Vagina (tissue), 2 donors: ENCODE measurements at regions of chr17 and their contacts with region 1.

Region 1: GRCh38 chr17:979538-980405 is at the start of gene NXN:
- DNase-seq: no peak
- H3K4me3 ChIP-seq: peak within 1 kb of the TSS; percentile 93
- H3K27ac ChIP-seq: peak within 1 kb of the TSS; percentile 93
- H3K4me1 ChIP-seq: peaks cover 43% of the 10 kb centered on the region
- H3K27me3 ChIP-seq: no peaks in the 10 kb centered on the region
- CTCF ChIP-seq: no peak
- POLR2A ChIP-seq: peak; percentile 18 to 71
- total RNA-seq, gene NXN: 51.6 TPM

Region 2: DNA sequence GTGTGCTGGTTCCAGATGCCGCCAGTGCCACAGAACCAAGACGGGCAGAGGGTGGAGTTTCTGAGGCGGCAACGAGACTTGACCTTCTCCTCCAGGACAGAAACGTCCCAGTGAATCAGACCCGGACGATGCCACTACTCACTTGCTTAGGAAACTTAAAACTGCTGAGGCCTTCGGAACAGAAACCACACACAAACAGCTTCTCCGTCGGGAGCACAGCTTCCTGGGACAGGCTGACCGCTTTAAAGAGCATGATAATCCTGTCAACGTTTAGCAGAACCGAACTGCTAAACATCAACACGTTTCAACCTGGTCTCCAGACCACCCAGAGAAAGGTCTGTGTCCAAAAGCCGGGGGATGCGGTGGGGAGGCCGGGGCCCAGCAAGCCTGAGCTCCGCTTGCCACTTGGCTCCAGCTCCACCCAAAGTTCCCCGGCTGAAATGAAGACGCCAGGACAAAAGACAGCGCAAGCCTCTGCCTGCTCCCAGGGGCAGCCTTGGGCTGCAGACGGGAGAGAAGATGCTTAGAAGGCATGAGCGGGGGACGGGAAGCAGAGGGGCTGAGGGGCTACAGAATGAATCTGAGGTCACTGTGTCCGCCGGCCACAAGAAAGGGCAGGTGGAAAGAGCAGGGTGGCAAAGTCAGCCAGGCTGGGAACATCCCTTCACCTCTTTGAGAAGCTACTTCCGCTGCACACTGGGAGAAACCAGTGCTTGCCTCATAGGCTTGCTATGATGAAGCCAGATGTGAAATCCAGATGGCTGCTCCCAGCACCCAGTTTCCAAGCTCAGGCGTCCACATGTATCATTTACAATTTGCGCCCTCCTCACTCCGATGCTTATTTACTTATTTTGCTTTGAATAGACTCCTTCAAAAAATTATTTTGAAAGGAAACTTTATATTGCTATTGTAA is 128.7 kb before region 1 on chr17:
- intact Hi-C with region 1: loop called (anchors 10 kb)
- DNase-seq: no peak
- H3K4me3 ChIP-seq: peak overlapping the region; percentile 18
- H3K27ac ChIP-seq: peak overlapping the region; percentile 75
- H3K4me1 ChIP-seq: peaks cover 57% of the 10 kb centered on the region
- H3K27me3 ChIP-seq: no peaks in the 10 kb centered on the region
- CTCF ChIP-seq: no peak
- POLR2A ChIP-seq: no peak

Region 3: DNA sequence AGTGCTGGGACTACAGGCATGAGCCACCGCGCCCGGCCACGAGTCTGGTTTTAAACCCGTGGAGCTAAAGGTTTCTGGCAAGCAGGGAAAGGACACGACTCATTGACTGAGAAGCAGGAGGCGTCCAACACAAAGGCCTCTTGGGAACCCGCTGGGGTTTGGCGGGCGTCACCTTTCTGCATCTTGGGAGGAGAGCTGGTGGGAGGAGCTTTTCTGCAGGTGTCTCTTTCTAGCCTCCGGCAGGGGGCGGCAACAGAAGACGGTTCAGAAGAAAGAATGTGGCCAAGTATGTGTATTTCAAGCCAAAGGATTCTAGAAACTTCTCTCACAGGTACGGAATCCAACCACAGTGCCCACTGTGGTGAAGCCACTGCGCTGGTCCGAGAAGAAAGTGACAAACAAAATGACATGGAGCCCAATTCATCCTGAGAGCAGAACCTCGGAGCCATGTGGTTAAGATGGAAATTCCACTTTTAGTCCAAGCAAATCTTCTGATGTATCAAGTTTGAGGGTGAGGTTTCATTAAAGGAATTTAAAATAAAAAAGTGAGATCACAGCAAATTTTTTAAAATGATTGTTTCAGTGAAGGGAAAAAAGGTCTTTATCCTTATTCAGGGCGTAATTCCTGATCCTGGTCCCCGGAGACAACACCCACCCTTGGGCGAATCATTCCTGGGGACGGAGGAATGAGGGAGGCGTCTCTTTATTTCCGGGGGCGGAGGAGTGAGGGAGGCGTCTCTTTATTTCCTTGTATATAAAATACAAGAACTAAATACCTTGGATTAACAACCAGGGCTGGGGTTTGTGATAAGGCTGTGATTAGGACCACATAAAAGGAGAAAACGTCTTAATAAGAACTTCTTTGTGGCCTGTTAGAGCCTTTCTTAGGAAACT is 100.0 kb before region 1 on chr17:
- intact Hi-C with region 1: loop called (anchors 10 kb)
- DNase-seq: no peak
- H3K4me3 ChIP-seq: no peak overlapping the region
- H3K27ac ChIP-seq: peak overlapping the region; percentile 80
- H3K4me1 ChIP-seq: peaks cover 60% of the 10 kb centered on the region
- H3K27me3 ChIP-seq: no peaks in the 10 kb centered on the region
- CTCF ChIP-seq: peak; percentile 21 to 60 (median 34)
- POLR2A ChIP-seq: no peak

Region 4: GRCh38 chr17:1022278-1023024 is 42.7 kb after region 1 on chr17:
- intact Hi-C with region 1: no loop called
- DNase-seq: no peak
- H3K4me3 ChIP-seq: no peak overlapping the region
- H3K27ac ChIP-seq: no peak overlapping the region
- H3K4me1 ChIP-seq: peaks cover 14% of the 10 kb centered on the region
- H3K27me3 ChIP-seq: no peaks in the 10 kb centered on the region
- CTCF ChIP-seq: no peak
- POLR2A ChIP-seq: no peak